ENCODE measurements at regions of chrX and their contacts with region 1.

Region 1: GRCh38 chrX:8738588-8739189 is 6.8 kb upstream of the ANOS1 start:
- DNase-seq: peak; percentile 39
- ATAC-seq: no peak

Region 2: GRCh38 chrX:7996414-7996813 is 742.3 kb before region 1 on chrX:
- intact Hi-C with region 1: loop called (anchors 5 kb)
- DNase-seq: no peak
- ATAC-seq: no peak

Region 3: GRCh38 chrX:8364369-8365141 is 374.1 kb before region 1 on chrX:
- intact Hi-C with region 1: loop called (anchors 10 kb)
- DNase-seq: peak; percentile 26
- ATAC-seq: peak; percentile 46

Measured in left ventricle myocardium superior (tissue), 1 donor.